ENCODE measurements at regions of chr7 and their contacts with region 1.

Region 1: GRCh38 chr7:50142425-50143017 is 49.5 kb upstream of the ZPBP start:
- DNase-seq: peak; percentile 68
- H3K4me3 Mint-ChIP-seq: peak overlapping the region; percentile 58
- H3K27ac Mint-ChIP-seq: peak overlapping the region; percentile 83
- H3K4me1 Mint-ChIP-seq: peaks cover 48% of the 10 kb centered on the region
- H3K27me3 Mint-ChIP-seq: peaks cover 4% of the 10 kb centered on the region

Region 2: DNA sequence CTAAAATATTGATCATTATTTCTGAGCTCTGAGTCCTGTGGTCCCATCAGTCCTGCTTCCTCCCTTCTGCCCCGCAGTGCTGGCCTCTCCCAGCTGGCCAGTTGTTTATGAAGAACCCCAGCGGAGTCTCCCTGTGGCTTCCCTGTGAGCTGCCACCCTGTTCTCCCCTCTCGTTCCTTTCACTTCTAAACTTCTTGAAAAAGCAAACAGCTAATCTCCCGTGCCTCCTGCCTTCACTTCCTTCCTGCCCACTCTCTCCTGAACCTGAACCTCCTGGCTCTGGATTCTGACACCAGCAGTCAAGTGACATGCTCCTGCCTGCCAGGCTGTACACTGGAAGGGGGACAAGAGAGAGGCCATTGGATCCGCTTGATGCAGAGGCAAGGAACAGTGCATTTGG is 14.2 kb after region 1 on chr7:
- CTCF ChIA-PET with region 1: interaction called, 10 read pairs
- POLR2A ChIA-PET with region 1: no interaction called
- DNase-seq: no peak
- H3K4me3 Mint-ChIP-seq: peak overlapping the region; percentile 47
- H3K27ac Mint-ChIP-seq: peak overlapping the region; percentile 90
- H3K4me1 Mint-ChIP-seq: peaks cover 35% of the 10 kb centered on the region
- H3K27me3 Mint-ChIP-seq: no peaks in the 10 kb centered on the region

Region 3: GRCh38 chr7:50304158-50304910 is 161.8 kb after region 1 on chr7 and contains the start of gene IKZF1:
- CTCF ChIA-PET with region 1: no interaction called
- POLR2A ChIA-PET with region 1: no interaction called
- DNase-seq: peak; percentile 57
- H3K4me3 Mint-ChIP-seq: peak within 1 kb of the TSS; percentile 97
- H3K27ac Mint-ChIP-seq: peak within 1 kb of the TSS; percentile 100
- H3K4me1 Mint-ChIP-seq: peaks cover 38% of the 10 kb centered on the region
- H3K27me3 Mint-ChIP-seq: no peaks in the 10 kb centered on the region
- total RNA-seq, gene IKZF1: 379 to 406 TPM

Measured in activated CD4-positive, alpha-beta T cell treated with anti-CD3 and anti-CD28 coated beads, Interleukin-2, amount 10 ng/mL, durations not matched to agents 7 days and 5 days (primary cell).